Sigmoid colon (tissue), 7 donors: ENCODE measurements at regions of chr2 and their contacts with region 1.

Region 1: GRCh38 chr2:27703638-27704341 is 40.1 kb downstream of the SLC4A1AP start:
- DNase-seq: peak; percentile 90
- H3K4me3 ChIP-seq: no peak overlapping the region
- H3K27ac ChIP-seq: peak overlapping the region in 3 of 4 donors; percentile 80 to 88 (median 85)
- H3K4me1 ChIP-seq: peaks cover 0 to 33% (median 17%) of the 10 kb centered on the region in 4 donors
- H3K27me3 ChIP-seq: no peaks in the 10 kb centered on the region
- CTCF ChIP-seq: peak; percentile 85 to 88 (median 87)
- EP300 ChIP-seq: no peak
- POLR2A ChIP-seq: no peak

Region 2: GRCh38 chr2:27823569-27823968 is 119.8 kb after region 1 on chr2:
- intact Hi-C with region 1: no loop called
- DNase-seq: no peak
- H3K4me3 ChIP-seq: no peak overlapping the region
- H3K27ac ChIP-seq: peak overlapping the region in 2 of 4 donors; percentile 8 to 72
- H3K4me1 ChIP-seq: no peaks in the 10 kb centered on the region
- H3K27me3 ChIP-seq: no peaks in the 10 kb centered on the region
- CTCF ChIP-seq: peak in 1 of 4 experiments; percentile 30
- EP300 ChIP-seq: no peak
- POLR2A ChIP-seq: no peak

Region 3: DNA sequence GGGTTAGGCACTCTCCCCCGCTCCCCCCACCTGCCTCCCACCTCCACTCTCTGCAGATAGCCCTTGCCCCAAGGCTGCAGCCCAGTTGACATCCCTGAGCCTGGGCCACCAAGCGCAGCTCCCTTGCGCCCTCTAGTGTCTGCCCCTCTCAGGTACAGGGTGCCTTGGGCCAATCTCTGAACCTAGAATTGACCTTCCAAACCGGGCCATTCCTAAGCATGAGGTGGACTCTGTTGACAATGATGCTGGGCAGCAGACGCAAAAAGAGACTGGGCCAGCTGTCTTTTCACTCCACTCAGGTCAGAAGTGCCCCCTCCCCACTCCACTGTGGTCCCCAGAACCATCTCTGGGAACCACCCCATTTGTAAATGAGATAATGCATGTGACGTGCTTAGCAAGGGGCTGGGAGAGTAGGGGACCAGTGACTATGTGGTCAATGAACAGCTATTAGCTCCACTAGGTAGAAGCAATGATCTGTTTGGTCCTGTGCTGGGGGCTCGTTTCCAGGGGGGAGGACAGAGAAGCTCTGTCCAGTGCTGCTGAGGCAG is 748.8 kb after region 1 on chr2:
- intact Hi-C with region 1: loop called (anchors 1 kb)
- DNase-seq: peak; percentile 81
- H3K4me3 ChIP-seq: no peak overlapping the region
- H3K27ac ChIP-seq: no peak overlapping the region
- H3K4me1 ChIP-seq: no peaks in the 10 kb centered on the region
- H3K27me3 ChIP-seq: no peaks in the 10 kb centered on the region
- CTCF ChIP-seq: peak; percentile 92 to 94 (median 92)
- EP300 ChIP-seq: no peak
- POLR2A ChIP-seq: no peak